ENCODE measurements at regions of chr15 and their contacts with region 1.

Region 1: DNA sequence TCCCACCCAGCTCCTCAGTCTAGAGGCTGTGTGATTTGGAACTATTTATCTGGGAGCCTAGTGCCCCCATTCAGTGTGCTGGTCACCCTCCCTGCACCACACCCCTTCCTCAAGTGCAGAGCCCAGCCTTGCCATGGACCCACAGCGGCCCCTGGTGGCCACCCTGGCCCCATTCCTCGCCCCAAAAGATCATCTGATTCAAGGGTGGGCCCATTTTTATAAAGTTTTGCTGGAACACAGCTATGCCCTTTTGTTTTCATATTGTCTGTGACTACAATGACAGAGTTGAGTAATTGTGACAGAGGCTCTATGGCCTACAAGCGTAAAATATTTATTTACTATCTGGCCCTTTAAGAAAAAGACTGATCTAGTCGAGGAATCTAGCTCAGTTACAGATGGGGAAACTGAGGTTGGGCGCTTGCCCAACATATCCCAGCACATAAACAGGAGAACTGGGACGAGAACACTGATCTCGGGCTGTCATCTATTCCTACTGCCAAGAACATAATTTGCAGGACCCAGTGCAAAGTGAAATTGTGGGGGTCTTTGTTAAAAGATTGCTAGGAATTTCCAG is 1.8 kb downstream of the FES start:
- DNase-seq: peak; percentile 94

Region 2: GRCh38 chr15:90501898-90502297 is 384.2 kb before region 1 on chr15:
- intact Hi-C with region 1: loop called in 1 of 2 experiments (anchors 10 kb)
- DNase-seq: no peak

Region 3: DNA sequence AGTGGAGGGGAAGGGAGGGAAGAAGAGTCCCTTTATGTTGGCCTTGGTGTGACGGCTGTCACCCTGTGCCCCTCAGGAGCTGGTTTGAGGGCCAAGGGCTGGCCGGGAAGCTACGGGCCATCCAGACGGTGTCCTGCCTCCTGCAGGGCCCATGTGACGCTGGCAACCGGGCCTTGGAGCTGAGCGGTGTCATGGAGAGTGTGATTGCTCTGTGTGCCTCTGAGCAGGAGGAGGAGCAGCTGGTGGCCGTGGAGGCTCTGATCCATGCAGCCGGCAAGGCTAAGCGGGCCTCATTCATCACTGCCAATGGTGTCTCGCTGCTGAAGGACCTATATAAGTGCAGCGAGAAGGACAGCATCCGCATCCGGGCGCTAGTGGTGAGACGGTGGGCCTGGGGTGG is 60.4 kb after region 1 on chr15:
- intact Hi-C with region 1: loop called in 1 of 2 experiments (anchors 10 kb)
- DNase-seq: no peak